ENCODE measurements at regions of chr7 and their contacts with region 1.

Region 1: DNA sequence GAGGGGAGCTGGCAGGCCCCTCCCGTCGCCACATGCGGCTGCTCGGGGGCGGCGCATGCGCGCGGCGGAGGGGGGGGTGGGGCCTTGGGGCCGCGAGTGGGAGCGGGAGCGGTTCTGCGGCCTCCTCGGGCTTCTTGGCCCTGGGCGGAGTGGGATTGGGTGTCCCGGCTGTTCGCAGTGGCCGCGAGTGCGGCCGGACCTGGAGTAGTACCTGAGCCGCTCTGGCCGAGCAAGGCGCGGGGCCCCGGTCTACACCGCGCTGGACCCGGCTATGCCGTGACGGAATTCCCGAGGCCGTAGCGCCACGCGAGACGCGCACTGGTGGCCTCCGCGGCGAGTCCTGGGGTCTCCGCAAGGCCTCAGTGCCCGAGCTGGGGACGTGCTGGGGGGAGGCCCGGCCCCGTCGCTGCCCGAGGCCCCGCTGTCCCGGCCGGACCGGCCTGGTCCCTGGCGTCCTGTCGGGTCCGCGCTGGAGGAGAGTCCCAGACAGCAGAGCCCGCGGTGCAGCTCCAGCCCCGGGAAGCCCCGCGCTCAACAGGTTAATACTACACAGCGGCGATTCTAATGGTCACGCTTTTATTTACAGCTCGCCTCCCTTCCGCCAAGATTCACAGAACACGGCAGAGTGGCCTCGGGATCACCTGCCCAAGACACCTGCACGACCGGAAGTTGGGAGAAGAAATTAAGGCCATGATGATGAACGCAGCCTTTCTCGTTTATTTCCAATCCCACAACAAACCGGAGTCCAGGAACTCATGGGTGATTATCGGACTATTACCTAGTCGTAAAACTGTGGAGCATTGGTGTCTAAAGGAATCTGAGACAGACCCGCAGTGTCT is 671 bp upstream of the PAXIP1 start:
- DNase-seq: peak; percentile 78 to 81
- H3K4me3 ChIP-seq: peak overlapping the region; percentile 87 to 98 (median 89)
- H3K27ac ChIP-seq: peak overlapping the region; percentile 90 to 96 (median 92)
- H3K4me1 ChIP-seq: peaks cover 3 to 10% of the 10 kb centered on the region in 2 donors
- H3K27me3 ChIP-seq: no peaks in the 10 kb centered on the region
- CTCF ChIP-seq: no peak
- POLR2A ChIP-seq: peak in 1 of 2 donors; percentile 66

Region 2: GRCh38 chr7:154927624-154928143 is 75.9 kb before region 1 on chr7:
- intact Hi-C with region 1: loop called (anchors 10 kb)
- DNase-seq: peak; percentile 85 to 86
- H3K4me3 ChIP-seq: peak overlapping the region in 2 of 3 donors; percentile 23 to 47
- H3K27ac ChIP-seq: peak overlapping the region; percentile 51 to 86 (median 82)
- H3K4me1 ChIP-seq: peaks cover 5 to 7% of the 10 kb centered on the region in 2 donors
- H3K27me3 ChIP-seq: no peaks in the 10 kb centered on the region
- CTCF ChIP-seq: peak; percentile 22 to 78 (median 61)
- POLR2A ChIP-seq: no peak

Measured in thyroid gland (tissue), 4 donors.